ENCODE measurements at regions of chr17 and their contacts with region 1.

Region 1: GRCh38 chr17:19766422-19767270 is 18.5 kb upstream of the ALDH3A1 start:
- DNase-seq: peak; percentile 38
- H3K4me3 ChIP-seq: no peak overlapping the region
- H3K27ac ChIP-seq: no peak overlapping the region
- H3K4me1 ChIP-seq: no peaks in the 10 kb centered on the region
- H3K27me3 ChIP-seq: no peaks in the 10 kb centered on the region
- CTCF ChIP-seq: peak; percentile 87 to 100

Region 2: DNA sequence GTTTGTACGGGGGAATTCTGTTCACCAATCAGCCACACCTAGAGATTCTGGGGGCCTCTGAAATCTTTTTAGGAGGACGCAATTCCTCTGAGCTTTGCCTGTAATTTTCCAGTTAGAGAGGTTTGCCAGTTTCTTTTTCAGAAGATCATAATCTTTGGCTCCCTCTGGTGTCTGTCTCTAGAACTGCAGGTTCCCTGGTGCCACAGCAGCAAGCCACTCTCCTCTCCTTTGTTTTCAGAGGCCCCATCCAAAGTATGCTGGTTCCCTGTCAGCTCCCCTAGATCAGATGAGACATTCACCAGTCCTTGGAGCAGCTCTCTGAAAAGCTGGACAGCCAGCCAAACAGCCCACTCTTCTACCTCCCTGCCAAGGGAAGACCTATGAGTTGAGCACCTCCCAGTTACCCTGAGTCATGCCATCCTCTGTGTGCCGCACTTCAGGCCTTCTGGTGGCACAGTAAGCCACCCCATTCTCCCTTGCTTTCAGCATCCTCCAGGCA is 319.5 kb before region 1 on chr17:
- CTCF ChIA-PET with region 1: no interaction called
- dilution Hi-C with region 1: no loop called
- in situ Hi-C with region 1: no loop called
- intact Hi-C with region 1: loop called (anchors 1 kb)
- DNase-seq: peak; percentile 46
- H3K4me3 ChIP-seq: no peak overlapping the region
- H3K27ac ChIP-seq: no peak overlapping the region
- H3K4me1 ChIP-seq: peaks cover 6% of the 10 kb centered on the region
- H3K27me3 ChIP-seq: no peaks in the 10 kb centered on the region
- CTCF ChIP-seq: peak; percentile 75 to 84

Region 3: GRCh38 chr17:19672009-19672750 is 94.5 kb before region 1 on chr17:
- CTCF ChIA-PET with region 1: no interaction called
- dilution Hi-C with region 1: loop called (anchors 5 kb)
- in situ Hi-C with region 1: no loop called
- intact Hi-C with region 1: no loop called
- DNase-seq: no peak
- H3K4me3 ChIP-seq: no peak overlapping the region
- H3K27ac ChIP-seq: no peak overlapping the region
- H3K4me1 ChIP-seq: no peaks in the 10 kb centered on the region
- H3K27me3 ChIP-seq: no peaks in the 10 kb centered on the region
- CTCF ChIP-seq: no peak

Region 4: GRCh38 chr17:19718604-19719354 is 47.9 kb before region 1 on chr17:
- CTCF ChIA-PET with region 1: interaction called, 7 read pairs
- dilution Hi-C with region 1: loop called (anchors 5 kb)
- in situ Hi-C with region 1: no loop called
- intact Hi-C with region 1: loop called (anchors 1 kb)
- DNase-seq: peak; percentile 23
- H3K4me3 ChIP-seq: no peak overlapping the region
- H3K27ac ChIP-seq: peak overlapping the region; percentile 45
- H3K4me1 ChIP-seq: peaks cover 50% of the 10 kb centered on the region
- H3K27me3 ChIP-seq: no peaks in the 10 kb centered on the region
- CTCF ChIP-seq: peak; percentile 49 to 75

Region 5: DNA sequence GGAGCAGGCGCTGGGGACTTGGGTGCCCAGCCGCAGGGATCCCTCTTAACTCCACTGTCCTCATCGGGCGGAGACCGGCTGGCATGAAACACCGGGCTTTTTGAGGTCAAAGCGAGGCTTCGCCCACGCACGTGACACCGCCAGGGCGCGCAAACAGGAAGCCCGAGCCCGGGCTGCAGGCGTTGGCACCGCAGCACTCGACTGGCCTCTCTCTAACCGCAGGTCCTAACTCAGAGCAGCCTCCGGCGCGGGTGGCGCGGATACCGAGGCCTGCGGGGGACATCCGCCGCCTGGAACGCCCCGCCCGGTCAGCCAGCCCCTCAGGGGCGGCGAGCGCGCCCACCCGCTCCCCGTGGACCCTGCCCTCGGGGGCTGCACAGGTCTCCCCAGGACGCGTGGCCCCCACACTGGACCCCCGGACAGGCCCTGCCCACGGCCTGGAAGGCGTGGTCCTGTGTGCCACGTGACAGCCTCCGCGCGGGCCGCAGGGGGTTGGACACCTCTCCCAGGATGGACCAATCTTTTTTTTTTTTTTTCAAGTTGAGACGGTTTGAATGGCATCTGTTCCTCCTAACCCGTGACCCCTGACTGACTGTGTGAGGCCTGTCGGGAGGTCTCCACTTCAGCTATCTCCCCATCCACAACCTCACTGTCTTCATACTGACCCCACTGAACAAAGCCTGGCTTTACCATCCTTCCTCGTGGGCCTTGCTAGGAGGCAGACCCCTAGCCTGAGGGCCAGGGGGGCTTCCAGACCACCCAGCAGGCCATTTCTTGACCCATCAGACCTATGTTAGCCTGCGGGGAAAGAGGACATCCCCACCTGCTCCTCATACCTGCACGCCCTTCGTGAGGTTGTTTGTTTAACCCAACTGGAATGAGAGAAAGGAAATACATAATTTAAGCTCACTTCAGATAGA is 41.9 kb before region 1 on chr17:
- CTCF ChIA-PET with region 1: interaction called, 7 read pairs
- dilution Hi-C with region 1: loop called (anchors 5 kb)
- in situ Hi-C with region 1: no loop called
- intact Hi-C with region 1: loop called (anchors 1 kb)
- DNase-seq: peak; percentile 75
- H3K4me3 ChIP-seq: no peak overlapping the region
- H3K27ac ChIP-seq: peak overlapping the region; percentile 72
- H3K4me1 ChIP-seq: peaks cover 53% of the 10 kb centered on the region
- H3K27me3 ChIP-seq: no peaks in the 10 kb centered on the region
- CTCF ChIP-seq: no peak

Region 6: GRCh38 chr17:19736071-19736470 is 30.6 kb before region 1 on chr17:
- CTCF ChIA-PET with region 1: no interaction called
- dilution Hi-C with region 1: no loop called
- in situ Hi-C with region 1: no loop called
- intact Hi-C with region 1: no loop called
- DNase-seq: no peak
- H3K4me3 ChIP-seq: no peak overlapping the region
- H3K27ac ChIP-seq: no peak overlapping the region
- H3K4me1 ChIP-seq: peaks cover 7% of the 10 kb centered on the region
- H3K27me3 ChIP-seq: no peaks in the 10 kb centered on the region
- CTCF ChIP-seq: no peak